Ascending aorta (tissue), 2 donors: ENCODE measurements at regions of chr10 and their contacts with region 1.

Region 1: DNA sequence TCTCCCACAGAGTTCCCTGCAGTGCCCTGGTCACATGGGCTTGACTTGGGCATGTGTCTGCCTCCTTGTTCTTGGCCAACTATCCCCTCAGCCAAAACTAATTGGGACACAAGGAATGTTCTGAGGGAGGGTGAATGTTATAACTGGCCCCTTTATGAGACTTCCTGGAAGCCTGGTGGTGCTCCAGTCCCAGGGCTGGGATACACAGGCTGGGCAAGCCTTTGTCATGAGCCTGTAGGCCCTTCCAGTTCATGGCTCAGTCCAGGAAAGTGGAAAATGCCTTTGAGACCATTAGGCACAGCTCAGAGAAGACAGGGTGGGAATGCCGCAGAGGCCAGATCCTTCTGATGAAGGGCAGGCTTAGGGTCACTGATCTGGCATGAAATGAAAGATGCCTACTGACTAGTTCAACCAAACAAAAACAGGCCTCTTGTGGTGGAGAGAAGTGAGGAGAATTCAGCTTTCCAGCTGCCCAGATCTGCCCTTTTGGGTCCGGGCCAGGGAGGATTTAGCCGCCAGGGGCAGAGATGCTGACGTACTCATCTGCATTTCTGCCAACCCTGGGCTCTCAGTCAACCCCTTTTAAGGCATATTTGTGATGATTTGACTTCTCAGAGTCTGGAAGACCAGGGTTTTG is 961.5 kb downstream of the KCNMA1 start:
- DNase-seq: peak; percentile 46 to 94
- H3K4me3 ChIP-seq: no peak overlapping the region
- H3K27ac ChIP-seq: peak overlapping the region; percentile 84 to 91
- H3K4me1 ChIP-seq: peaks cover 16 to 38% of the 10 kb centered on the region in 2 donors
- H3K27me3 ChIP-seq: no peaks in the 10 kb centered on the region
- CTCF ChIP-seq: peak in 2 of 3 experiments; percentile 21 to 27

Region 2: GRCh38 chr10:75651417-75651816 is 1024.7 kb before region 1 on chr10:
- intact Hi-C with region 1: loop called (anchors 5 kb)
- DNase-seq: no peak
- H3K4me3 ChIP-seq: no peak overlapping the region
- H3K27ac ChIP-seq: no peak overlapping the region
- H3K4me1 ChIP-seq: peaks cover 12 to 37% of the 10 kb centered on the region in 2 donors
- H3K27me3 ChIP-seq: no peaks in the 10 kb centered on the region
- CTCF ChIP-seq: peak in 1 of 3 experiments; percentile 7

Region 3: DNA sequence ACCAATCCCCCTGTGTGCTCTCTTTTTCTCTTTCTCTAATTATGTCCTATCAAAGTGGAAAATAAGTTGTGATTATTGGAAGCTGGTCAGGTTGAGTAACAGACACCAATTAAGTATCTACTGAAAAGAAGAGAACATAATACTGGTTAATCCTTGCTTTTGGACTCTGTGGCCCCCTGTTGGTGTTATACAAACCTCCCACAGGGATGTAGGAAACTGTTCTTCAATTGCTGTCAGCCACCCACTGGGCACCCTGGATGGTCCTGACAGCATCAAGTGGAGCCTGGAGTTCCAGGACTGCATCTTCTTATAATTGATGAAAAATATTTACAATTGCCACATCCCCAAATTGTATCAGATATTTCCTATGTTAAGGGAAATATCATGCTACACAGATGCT is 21.9 kb after region 1 on chr10:
- intact Hi-C with region 1: no loop called
- DNase-seq: no peak
- H3K4me3 ChIP-seq: no peak overlapping the region
- H3K27ac ChIP-seq: no peak overlapping the region
- H3K4me1 ChIP-seq: no peaks in the 10 kb centered on the region
- H3K27me3 ChIP-seq: no peaks in the 10 kb centered on the region
- CTCF ChIP-seq: no peak

Region 4: DNA sequence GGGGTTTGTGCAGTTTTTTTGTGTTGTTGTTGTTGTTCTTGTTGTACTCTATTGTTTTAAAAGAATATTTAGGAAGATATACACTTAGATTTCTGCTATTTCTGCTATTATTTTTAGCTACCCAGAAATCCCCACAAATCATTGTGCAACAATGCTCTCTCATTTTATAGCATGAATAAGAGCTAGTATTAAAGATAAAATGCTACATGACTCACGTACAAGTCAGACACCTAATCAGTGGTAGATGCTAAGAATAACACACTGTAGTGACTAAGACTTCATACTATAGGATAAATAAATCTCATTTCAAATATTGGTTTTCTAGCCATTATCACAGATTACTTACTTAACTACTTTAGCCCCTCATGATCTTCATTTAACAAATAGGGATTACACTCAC is 41.1 kb after region 1 on chr10:
- intact Hi-C with region 1: loop called (anchors 5 kb)
- DNase-seq: no peak
- H3K4me3 ChIP-seq: no peak overlapping the region
- H3K27ac ChIP-seq: peak overlapping the region in 1 of 2 donors; percentile 27
- H3K4me1 ChIP-seq: peaks cover 0 to 11% of the 10 kb centered on the region in 2 donors
- H3K27me3 ChIP-seq: no peaks in the 10 kb centered on the region
- CTCF ChIP-seq: no peak

Region 5: DNA sequence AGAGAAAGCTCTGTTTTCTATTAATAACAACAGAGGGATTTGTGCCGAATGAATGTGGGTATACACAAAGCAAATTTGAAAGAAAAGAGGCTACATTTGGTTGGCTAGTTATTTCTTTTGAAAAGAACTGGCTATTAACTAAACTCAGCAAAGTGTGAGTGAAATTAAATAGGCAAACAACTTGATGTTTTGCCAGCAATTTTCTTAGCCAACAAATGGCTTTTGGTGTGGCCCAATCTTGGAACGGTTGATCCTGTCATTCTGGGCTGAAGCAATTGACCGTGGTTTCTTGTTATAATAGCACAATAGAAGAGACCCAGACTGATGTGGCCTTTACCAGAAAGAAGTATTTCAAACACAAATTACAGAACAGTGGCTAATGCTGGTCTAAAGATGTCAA is 62.9 kb after region 1 on chr10:
- intact Hi-C with region 1: no loop called
- DNase-seq: no peak
- H3K4me3 ChIP-seq: no peak overlapping the region
- H3K27ac ChIP-seq: no peak overlapping the region
- H3K4me1 ChIP-seq: peaks cover 0 to 4% of the 10 kb centered on the region in 2 donors
- H3K27me3 ChIP-seq: no peaks in the 10 kb centered on the region
- CTCF ChIP-seq: no peak

Region 6: GRCh38 chr10:76911184-76911583 is 235.1 kb after region 1 on chr10:
- intact Hi-C with region 1: no loop called
- DNase-seq: no peak
- H3K4me3 ChIP-seq: no peak overlapping the region
- H3K27ac ChIP-seq: no peak overlapping the region
- H3K4me1 ChIP-seq: no peaks in the 10 kb centered on the region
- H3K27me3 ChIP-seq: no peaks in the 10 kb centered on the region
- CTCF ChIP-seq: no peak

Region 7: GRCh38 chr10:76984559-76985443 is 308.7 kb after region 1 on chr10:
- intact Hi-C with region 1: loop called (anchors 10 kb)
- DNase-seq: peak in 1 of 2 donors; percentile 72
- H3K4me3 ChIP-seq: no peak overlapping the region
- H3K27ac ChIP-seq: no peak overlapping the region
- H3K4me1 ChIP-seq: peaks cover 0 to 2% of the 10 kb centered on the region in 2 donors
- H3K27me3 ChIP-seq: no peaks in the 10 kb centered on the region
- CTCF ChIP-seq: peak; percentile 61 to 91 (median 79)

Region 8: DNA sequence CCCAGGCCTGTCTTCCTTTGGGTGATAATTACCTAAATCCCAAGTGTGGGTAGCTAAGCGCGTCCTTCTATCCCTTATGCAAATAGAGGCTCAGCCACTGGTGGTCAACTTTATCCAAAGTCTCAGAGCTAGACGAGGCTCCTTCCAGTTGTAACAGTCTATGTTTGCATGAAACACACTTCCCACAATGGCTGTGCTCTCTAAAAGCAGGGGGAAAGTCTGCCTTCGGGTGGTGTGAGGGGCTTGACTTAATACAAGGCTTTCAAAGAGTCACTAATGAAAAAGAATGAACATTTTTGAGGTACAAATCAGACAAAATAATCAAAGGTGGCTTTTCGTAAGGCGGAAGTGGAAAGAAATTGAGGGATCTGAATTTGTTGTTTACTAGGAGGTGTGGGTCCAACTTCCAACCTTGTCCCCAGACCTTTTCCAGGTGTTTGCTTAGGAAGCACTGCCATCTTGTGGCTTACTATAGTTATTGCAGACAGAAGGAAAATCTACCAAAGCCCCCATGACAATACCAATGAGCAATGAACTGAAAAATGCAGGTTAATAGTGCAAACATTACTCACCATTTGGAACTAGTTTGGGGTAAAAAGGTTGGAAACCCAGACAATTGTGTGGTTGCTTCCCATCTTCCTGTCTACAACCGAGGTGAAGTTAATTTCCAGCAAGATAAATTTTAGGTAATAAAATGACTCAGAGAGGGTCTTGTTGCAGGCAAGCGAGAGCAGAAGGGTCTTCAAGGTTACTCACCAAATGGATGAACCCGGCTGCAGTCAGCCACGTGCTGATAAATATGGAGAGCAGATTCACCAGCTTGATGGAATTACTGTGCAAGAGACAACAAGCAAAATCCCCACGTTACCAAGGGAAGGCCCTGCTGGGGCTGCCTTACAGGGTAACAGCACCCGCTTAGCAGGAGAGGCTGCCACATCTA is 435.8 kb after region 1 on chr10:
- intact Hi-C with region 1: loop called (anchors 10 kb)
- DNase-seq: no peak
- H3K4me3 ChIP-seq: no peak overlapping the region
- H3K27ac ChIP-seq: peak overlapping the region; percentile 75 to 82
- H3K4me1 ChIP-seq: peaks cover 14 to 31% of the 10 kb centered on the region in 2 donors
- H3K27me3 ChIP-seq: no peaks in the 10 kb centered on the region
- CTCF ChIP-seq: peak; percentile 73 to 86 (median 76)